Endothelial cell of umbilical vein (primary cell): ENCODE measurements at regions of chr7 and their contacts with region 1.

Region 1: DNA sequence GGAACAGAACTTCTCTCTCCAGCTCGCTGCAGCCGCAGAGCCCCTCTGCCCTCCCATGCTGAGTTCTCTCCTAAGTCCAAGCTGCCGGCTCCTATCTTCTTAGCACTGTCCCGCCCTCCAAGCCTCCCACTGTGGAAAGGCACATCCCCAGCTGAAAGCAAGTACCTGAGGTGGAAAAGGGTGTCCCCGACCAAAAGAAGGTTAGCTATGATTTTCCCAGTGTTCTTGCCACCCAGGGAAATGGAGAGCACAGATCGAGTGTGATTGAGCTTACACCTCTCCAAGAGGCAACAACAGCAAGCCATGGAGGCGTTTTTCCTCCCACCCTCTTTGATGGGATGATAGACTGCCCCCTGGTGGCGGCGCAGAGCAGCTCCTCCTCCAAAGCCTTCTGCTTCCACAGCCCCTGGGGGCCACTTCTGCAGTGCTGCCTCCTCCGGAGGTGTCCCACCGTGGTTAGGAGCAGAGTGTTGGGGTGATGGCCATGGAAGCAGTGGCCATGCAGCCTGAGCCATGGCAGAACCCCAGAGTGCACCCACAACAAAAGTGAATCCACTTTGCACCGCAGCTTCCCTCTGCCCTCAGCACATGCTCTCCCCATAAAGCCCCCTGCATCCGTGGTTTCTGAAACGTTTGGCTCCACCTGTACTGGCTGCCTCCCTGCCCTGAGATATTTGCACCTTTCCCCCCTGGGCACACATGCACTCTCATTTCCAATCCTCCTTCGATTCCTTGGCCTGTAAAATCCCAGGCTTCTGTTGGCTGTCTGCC is 143.1 kb upstream of the STK17A start:
- DNase-seq: peak; percentile 37
- H3K4me3 ChIP-seq: no peak overlapping the region
- H3K27ac ChIP-seq: no peak overlapping the region
- H3K4me1 ChIP-seq: no peaks in the 10 kb centered on the region
- H3K27me3 ChIP-seq: peaks cover 0 to 2% of the 10 kb centered on the region in 2 experiments
- CTCF ChIP-seq: peak; percentile 77 to 95
- POLR2A ChIP-seq: no peak

Region 2: GRCh38 chr7:42624471-42624870 is 815.3 kb before region 1 on chr7:
- CTCF ChIA-PET with region 1: no interaction called
- POLR2A ChIA-PET with region 1: no interaction called
- dilution Hi-C with region 1: no loop called
- intact Hi-C with region 1: no loop called
- DNase-seq: no peak
- H3K4me3 ChIP-seq: no peak overlapping the region
- H3K27ac ChIP-seq: no peak overlapping the region
- H3K4me1 ChIP-seq: no peaks in the 10 kb centered on the region
- H3K27me3 ChIP-seq: no peaks in the 10 kb centered on the region
- CTCF ChIP-seq: no peak
- POLR2A ChIP-seq: no peak

Region 3: GRCh38 chr7:43175570-43176200 is 264.1 kb before region 1 on chr7:
- CTCF ChIA-PET with region 1: interaction called, 13 read pairs
- POLR2A ChIA-PET with region 1: no interaction called
- dilution Hi-C with region 1: no loop called
- intact Hi-C with region 1: loop called (anchors 5 kb)
- DNase-seq: no peak
- H3K4me3 ChIP-seq: no peak overlapping the region
- H3K27ac ChIP-seq: no peak overlapping the region
- H3K4me1 ChIP-seq: no peaks in the 10 kb centered on the region
- H3K27me3 ChIP-seq: peaks cover 2 to 10% of the 10 kb centered on the region in 2 experiments
- CTCF ChIP-seq: no peak
- POLR2A ChIP-seq: no peak

Region 4: DNA sequence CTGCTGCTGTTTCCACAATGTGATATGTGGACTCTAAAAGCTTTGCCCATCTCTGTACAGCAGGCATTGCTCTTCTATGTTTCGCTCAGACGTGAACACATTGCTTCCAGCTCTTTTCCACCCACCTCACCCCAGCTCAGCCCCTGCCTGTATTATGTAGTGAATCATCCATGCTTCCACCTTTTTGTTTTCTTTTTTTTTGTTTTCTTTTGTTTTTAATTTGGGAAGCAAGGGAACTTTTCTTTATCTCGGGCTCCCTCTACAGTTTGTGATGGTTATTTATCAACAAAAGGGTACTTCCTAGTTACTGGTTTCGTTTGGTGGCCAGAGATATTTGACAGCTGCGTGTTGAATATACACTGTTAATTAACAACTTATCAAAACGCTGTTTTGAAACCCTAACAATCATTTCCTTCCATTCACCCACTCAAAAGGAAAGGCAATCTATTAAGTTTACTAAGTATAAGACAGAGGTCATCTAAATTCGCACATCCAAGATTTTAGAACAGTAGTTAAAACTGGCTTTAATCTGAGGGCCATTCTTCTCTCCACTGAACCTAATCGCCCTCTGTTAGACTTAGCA is 15.2 kb after region 1 on chr7:
- CTCF ChIA-PET with region 1: interaction called, 24 read pairs
- POLR2A ChIA-PET with region 1: no interaction called
- dilution Hi-C with region 1: no loop called
- intact Hi-C with region 1: no loop called
- DNase-seq: peak; percentile 68
- H3K4me3 ChIP-seq: peak overlapping the region in 1 of 3 experiments; percentile 39
- H3K27ac ChIP-seq: no peak overlapping the region
- H3K4me1 ChIP-seq: peaks cover 3% of the 10 kb centered on the region
- H3K27me3 ChIP-seq: peaks cover 9 to 29% of the 10 kb centered on the region in 2 experiments
- CTCF ChIP-seq: peak; percentile 30 to 50
- POLR2A ChIP-seq: no peak